Kidney (tissue), 22 donors: ENCODE measurements at regions of chr2 and their contacts with region 1.

Region 1: DNA sequence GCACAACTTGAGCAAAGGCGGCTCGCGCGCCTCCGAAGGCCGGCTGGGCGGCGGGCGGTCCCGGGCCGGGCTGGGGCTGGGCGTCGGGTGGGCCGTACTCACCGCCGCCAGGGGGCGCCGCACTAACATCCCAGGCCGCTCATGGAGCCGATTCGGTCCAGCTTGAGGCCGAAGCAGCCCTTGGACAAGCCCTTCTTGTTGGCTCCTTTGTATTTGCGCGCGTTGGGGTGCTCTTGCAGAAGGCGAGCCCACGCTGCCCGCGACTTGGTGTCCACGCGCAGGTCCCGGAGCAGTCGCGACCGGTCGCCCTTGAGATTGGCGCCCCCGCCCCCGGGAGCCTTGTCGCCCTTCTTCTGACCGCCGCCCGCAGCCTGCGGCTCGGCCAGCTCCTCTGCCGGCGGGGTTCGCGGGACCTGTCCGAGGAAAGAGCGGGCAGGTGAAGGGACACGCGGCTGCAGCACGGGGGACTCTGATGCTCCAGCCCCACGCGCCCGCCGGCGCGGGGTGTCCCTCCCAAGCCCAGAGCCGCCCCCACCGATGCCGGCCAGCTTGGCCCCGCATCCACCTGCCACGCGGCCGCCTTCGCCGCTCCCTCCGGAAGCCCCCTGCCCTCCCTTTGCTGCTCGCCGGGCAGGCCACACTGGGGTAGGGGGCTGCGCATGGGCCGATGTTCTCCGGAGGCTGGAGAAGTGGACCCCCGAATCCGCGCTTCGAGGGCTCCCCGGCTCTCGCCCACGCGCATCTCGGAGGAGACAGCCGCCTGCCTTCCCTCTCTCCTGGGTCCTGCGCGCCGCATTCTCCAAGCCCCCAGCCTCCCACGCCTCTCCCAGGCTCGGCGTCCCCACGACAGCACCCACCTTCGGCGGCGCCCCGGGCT is 655 bp downstream of the NPPC start:
- DNase-seq: peak; percentile 89 to 94 (median 91)
- H3K4me3 ChIP-seq: peak overlapping the region in 1 of 3 donors; percentile 51
- H3K27ac ChIP-seq: no peak overlapping the region
- H3K4me1 ChIP-seq: peaks cover 0 to 18% (median 0%) of the 10 kb centered on the region in 3 donors
- H3K27me3 ChIP-seq: peaks cover 28% of the 10 kb centered on the region
- CTCF ChIP-seq: peak; percentile 86

Region 2: DNA sequence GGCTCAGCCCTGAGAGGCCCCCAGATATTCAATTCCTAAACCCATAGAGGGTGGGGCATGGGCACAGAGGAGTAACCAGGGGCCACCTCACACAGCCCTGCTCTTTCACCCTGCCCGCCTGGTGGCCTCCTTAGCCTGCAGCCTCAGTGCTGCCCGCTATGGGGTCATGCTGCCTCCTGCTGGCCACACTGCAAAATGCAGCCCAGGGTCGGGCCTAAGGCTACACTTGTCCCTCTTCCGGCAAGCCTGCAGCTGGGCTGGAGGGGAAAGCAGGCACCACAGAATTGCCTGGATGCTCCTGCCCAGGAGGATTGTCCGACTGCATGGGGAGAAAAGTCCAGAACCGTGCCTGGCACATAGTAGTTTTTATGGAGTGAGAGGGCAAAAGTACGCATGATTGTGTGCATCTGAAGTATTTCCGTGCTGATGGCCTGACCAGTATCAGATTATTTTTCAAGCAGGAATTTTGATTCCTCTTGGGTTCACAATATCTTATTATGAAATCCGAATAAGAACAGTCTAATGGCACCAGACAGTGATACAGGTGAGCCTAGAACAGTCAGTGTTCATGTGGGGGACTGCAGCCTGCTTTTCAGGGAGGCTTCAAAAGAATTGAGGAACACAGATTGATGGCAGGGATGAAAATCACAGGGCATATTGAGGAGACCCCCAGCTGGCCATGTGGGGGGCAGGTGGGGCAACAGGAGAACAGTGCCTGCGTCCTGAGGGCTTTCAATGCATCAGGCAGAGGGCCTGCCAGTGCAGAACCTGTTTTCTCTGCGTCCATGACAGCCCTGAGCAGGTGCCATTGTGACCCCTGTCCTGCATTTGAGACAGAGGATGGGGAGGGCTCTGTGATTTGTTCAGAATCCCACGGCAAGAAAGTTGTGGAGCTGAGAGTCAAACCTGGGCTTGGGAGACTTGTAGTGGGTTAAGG is 401.8 kb after region 1 on chr2:
- intact Hi-C with region 1: loop called (anchors 10 kb)
- DNase-seq: peak; percentile 67 to 85 (median 80)
- H3K4me3 ChIP-seq: no peak overlapping the region
- H3K27ac ChIP-seq: no peak overlapping the region
- H3K4me1 ChIP-seq: peaks cover 0 to 8% (median 0%) of the 10 kb centered on the region in 3 donors
- H3K27me3 ChIP-seq: no peaks in the 10 kb centered on the region
- CTCF ChIP-seq: peak; percentile 88